Posterior vena cava (tissue), 2 donors: ENCODE measurements at regions of chr12 and their contacts with region 1.

Region 1: GRCh38 chr12:5022465-5023061 is 21.1 kb upstream of the KCNA5 start:
- DNase-seq: no peak

Region 2: DNA sequence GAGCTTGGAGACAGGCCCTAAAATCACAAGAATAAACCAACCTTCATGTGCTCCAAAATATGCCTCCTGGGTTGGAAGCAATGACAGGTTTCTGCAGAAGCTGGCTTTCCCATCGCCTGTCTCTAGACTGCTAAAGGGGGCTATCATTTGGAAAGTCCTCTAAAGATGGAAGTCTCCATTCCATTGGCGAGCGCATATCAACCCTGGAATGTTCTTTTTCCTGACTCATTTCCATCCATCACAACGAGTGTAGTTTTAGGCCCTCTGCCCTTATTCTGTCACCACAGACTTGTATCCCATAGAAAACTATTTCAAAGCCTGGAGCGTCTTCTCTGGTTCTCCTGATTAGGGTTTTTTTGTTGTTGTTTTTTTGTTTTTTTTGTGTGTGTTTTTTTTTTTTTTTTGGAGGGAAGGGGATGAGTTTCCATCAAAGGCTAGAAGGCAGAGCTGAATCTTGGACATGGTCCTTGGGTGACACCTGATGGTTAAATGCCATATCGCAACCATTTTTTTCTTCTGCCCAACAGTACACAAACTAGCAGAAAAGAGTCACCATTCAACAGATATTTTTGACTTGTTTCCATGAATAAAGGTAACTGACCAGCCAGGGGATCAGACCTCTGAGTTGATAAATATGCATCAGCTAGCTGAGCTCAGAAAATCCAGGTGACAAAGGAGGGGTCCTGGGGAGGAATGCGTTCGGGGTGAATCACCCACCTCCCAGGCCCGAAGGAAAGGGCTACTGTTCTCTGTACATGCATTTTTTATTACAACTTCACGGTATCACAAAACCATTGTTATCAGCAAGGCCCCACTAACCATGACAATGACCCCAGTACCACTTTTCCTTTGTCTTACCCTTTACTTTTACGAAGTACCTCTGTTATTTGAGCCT is 61.6 kb after region 1 on chr12:
- intact Hi-C with region 1: loop called (anchors 5 kb)
- DNase-seq: no peak